ENCODE measurements at regions of chr18 and their contacts with region 1.

Region 1: DNA sequence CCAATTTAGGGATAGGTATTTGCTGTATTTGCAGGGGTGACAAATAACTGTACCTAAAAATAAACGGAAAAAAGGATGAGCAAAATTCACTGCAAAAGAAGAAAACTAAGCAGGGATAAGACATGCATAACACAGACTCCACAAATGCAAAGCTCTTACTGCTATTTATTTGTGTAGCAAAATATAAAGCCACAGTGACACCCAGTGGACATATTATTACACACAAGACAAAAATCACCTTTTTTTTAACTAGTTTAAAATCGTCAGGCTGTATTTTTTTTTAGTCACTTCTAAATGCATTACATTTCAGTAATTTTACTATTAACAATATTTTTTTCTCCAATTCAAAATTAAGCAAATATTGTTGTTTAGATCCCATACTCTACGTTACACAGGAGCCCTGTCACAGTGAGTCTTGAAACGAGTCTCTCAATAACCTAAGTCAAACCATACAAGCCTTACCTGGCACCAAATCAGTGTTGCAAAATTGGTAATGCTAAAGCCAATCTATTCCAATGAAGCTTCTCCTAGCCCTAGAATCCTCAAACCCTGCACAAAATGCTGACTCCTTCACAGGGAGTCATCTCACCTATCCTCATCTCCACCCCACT is 23.7 kb downstream of the METTL4 start:
- DNase-seq: peak in 4 of 35 experiments; percentile 6 to 64 (median 10)
- ATAC-seq: peak in 3 of 4 experiments; percentile 47 to 58 (median 52)
- H3K4me3 ChIP-seq: no peak overlapping the region
- H3K4me3 Mint-ChIP-seq: no peak overlapping the region
- H3K27ac ChIP-seq: no peak overlapping the region
- H3K27ac Mint-ChIP-seq: peak overlapping the region in 1 of 2 donors; percentile 29
- H3K4me1 ChIP-seq: no peaks in the 10 kb centered on the region
- H3K4me1 Mint-ChIP-seq: peaks cover 13 to 26% (median 16%) of the 10 kb centered on the region in 3 donors
- H3K27me3 ChIP-seq: no peaks in the 10 kb centered on the region
- H3K27me3 Mint-ChIP-seq: no peaks in the 10 kb centered on the region

Region 2: DNA sequence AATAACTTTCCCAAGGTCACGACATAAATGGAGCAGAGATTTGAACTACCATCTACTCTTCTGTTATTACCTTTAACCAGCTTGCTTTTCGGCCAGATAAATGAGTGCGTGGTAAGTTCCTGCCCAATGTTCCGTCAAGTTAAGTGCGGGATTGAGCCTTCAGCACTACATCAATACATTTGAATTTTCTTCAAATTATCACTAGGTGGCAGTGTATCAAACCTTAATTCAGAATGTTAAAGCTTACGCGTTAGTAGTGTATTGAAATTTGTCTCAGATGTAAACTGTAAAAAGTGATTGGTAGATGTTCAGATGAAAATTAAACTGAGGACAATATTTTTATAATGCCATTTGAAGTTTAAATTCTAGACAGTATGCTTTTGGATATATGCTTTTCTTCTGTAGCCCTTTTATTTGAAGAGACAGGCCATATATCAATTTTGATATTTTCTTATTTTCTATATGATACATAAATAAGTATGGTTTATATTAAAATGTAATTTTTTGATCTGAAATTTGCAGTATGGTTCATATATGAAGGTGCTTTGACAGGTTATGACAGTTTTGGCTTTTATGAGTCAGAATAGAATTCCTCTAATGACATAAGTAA is 961.6 kb before region 1 on chr18:
- CTCF ChIA-PET with region 1: interaction called in 1 of 2 experiments, 10 read pairs
- POLR2A ChIA-PET with region 1: no interaction called
- DNase-seq: peak in 1 of 35 experiments; percentile 19
- ATAC-seq: no peak
- H3K4me3 ChIP-seq: no peak overlapping the region
- H3K4me3 Mint-ChIP-seq: no peak overlapping the region
- H3K27ac ChIP-seq: no peak overlapping the region
- H3K27ac Mint-ChIP-seq: no peak overlapping the region
- H3K4me1 ChIP-seq: no peaks in the 10 kb centered on the region
- H3K4me1 Mint-ChIP-seq: peaks cover 0 to 2% (median 0%) of the 10 kb centered on the region in 3 donors
- H3K27me3 ChIP-seq: no peaks in the 10 kb centered on the region
- H3K27me3 Mint-ChIP-seq: peaks cover 8 to 15% of the 10 kb centered on the region in 2 donors

Region 3: DNA sequence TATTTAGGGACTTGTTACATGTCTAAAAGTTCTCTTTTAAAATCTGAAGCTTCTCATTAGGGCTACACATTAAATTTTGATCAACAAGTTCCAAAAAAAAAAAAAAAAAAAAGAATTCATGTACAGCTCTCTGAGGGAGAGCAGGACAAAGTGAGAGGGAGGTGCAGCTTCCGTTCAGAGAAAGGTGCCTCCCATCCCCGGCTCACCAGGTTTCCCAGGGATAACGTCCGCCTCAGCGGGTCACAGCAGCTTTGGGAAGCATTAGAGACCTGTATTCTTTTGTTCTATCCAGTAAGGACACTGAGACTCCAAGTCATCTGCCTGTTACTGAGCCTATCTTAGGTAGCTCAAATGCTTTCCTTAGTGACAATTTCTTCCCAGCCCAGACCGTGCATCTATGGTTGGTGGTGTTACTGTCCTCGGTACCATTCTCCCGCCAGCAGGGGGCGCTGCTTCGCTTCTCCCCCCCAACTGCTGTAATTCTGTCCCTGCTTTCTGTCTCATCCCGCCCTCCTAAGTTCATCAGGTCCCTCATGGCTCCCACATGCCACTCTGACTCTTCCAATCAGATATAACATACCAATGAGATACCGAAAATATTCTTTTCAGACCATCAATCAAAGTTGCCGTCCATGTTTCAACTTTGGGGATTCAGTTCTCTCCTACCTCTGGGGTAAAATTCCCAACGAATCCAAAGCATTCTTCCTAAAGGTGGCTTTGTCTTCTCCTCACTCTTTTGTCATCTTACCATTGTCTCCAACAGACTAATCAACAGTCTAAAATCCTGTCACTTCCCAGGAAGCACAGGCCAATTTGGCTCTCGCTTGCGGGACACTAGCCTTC is 442.7 kb before region 1 on chr18:
- CTCF ChIA-PET with region 1: interaction called, 7 to 13 read pairs
- POLR2A ChIA-PET with region 1: no interaction called
- DNase-seq: peak in 23 of 35 experiments; percentile 2 to 56 (median 11)
- ATAC-seq: peak in 2 of 4 experiments; percentile 27 to 48
- H3K4me3 ChIP-seq: no peak overlapping the region
- H3K4me3 Mint-ChIP-seq: no peak overlapping the region
- H3K27ac ChIP-seq: no peak overlapping the region
- H3K27ac Mint-ChIP-seq: no peak overlapping the region
- H3K4me1 ChIP-seq: no peaks in the 10 kb centered on the region
- H3K4me1 Mint-ChIP-seq: no peaks in the 10 kb centered on the region
- H3K27me3 ChIP-seq: peaks cover 0 to 4% of the 10 kb centered on the region in 2 experiments
- H3K27me3 Mint-ChIP-seq: peaks cover 6 to 12% of the 10 kb centered on the region in 2 donors

Region 4: GRCh38 chr18:2337552-2338141 is 209.9 kb before region 1 on chr18:
- CTCF ChIA-PET with region 1: interaction called, 16 to 21 read pairs
- POLR2A ChIA-PET with region 1: no interaction called
- DNase-seq: peak in 28 of 35 experiments; percentile 6 to 62 (median 26)
- ATAC-seq: no peak
- H3K4me3 ChIP-seq: no peak overlapping the region
- H3K4me3 Mint-ChIP-seq: no peak overlapping the region
- H3K27ac ChIP-seq: no peak overlapping the region
- H3K27ac Mint-ChIP-seq: no peak overlapping the region
- H3K4me1 ChIP-seq: no peaks in the 10 kb centered on the region
- H3K4me1 Mint-ChIP-seq: no peaks in the 10 kb centered on the region
- H3K27me3 ChIP-seq: peaks cover 0 to 3% of the 10 kb centered on the region in 2 experiments
- H3K27me3 Mint-ChIP-seq: peaks cover 19 to 22% of the 10 kb centered on the region in 2 donors

Region 5: DNA sequence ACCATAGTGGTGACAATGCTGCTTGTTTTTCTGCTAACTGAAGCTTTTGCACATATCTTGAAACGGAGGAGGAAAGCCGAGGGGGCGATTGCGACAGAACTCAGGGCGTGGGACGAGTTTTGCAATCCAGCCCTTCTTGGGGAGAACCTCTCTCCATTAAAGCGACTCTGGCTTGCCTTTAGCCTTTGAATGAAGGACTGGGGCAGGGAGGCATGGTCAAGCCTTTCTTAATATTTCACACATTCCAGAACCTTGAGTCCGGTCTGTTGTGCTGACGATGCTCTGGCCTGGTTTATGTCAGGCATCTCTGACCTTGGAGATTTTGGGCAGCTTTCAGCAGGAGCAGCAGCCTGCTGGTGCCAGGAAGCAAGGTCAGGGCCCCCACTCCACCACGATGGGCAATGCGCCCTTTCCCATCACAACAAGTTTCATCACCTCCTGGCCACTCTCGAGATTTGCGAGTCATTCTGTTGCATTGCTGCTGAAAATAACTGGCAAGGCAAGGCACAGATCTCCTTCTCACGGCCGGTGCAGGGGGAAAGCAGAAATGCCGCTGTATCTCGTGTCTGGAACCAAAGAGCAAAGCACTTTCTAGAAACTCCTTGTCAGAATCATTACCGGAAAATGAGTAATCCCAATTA is 310.0 kb after region 1 on chr18:
- CTCF ChIA-PET with region 1: no interaction called
- POLR2A ChIA-PET with region 1: no interaction called
- DNase-seq: peak in 1 of 35 experiments; percentile 30
- ATAC-seq: no peak
- H3K4me3 ChIP-seq: no peak overlapping the region
- H3K4me3 Mint-ChIP-seq: no peak overlapping the region
- H3K27ac ChIP-seq: no peak overlapping the region
- H3K27ac Mint-ChIP-seq: no peak overlapping the region
- H3K4me1 ChIP-seq: peaks cover 3 to 12% of the 10 kb centered on the region in 2 experiments
- H3K4me1 Mint-ChIP-seq: peaks cover 0 to 7% (median 6%) of the 10 kb centered on the region in 3 donors
- H3K27me3 ChIP-seq: peaks cover 0 to 15% of the 10 kb centered on the region in 2 experiments
- H3K27me3 Mint-ChIP-seq: peaks cover 3 to 12% of the 10 kb centered on the region in 2 donors